Calu3 (cell line): ENCODE measurements at regions of chr1 and their contacts with region 1.

Region 1: GRCh38 chr1:151619489-151620093 is 7.7 kb downstream of the SNX27 start:
- DNase-seq: no peak
- H3K4me3 Mint-ChIP-seq: no peak overlapping the region
- H3K27ac Mint-ChIP-seq: peak overlapping the region; percentile 3
- H3K4me1 Mint-ChIP-seq: peaks cover 47% of the 10 kb centered on the region
- H3K27me3 Mint-ChIP-seq: no peaks in the 10 kb centered on the region
- CTCF ChIP-seq: no peak

Region 2: GRCh38 chr1:151639466-151639865 is 19.9 kb after region 1 on chr1:
- CTCF ChIA-PET with region 1: interaction called, 12 read pairs
- intact Hi-C with region 1: loop called (anchors 2 kb)
- DNase-seq: peak; percentile 15
- H3K4me3 Mint-ChIP-seq: peak overlapping the region; percentile 66
- H3K27ac Mint-ChIP-seq: peak overlapping the region; percentile 90
- H3K4me1 Mint-ChIP-seq: peaks cover 37% of the 10 kb centered on the region
- H3K27me3 Mint-ChIP-seq: no peaks in the 10 kb centered on the region
- CTCF ChIP-seq: no peak

Region 3: DNA sequence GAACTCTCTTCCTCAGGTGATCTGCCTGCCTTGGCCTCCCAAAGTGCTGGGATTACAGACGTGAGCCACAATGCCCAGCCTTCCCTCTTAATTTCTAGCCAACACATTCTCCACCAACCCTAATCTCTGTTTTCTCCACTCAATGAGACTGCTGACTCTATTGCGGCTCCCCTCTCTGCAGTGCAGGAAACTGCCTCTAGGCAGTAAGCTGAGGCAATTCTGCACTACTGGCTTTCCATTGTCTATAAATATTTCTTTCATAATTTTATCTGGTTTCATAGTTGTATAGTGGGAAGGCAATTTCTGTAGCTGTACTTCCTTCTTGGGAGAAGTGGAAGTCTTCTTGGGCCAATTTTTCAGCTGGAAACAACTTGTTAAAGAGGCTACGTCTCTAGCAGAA is 133.6 kb after region 1 on chr1:
- CTCF ChIA-PET with region 1: no interaction called
- intact Hi-C with region 1: no loop called
- DNase-seq: no peak
- H3K4me3 Mint-ChIP-seq: no peak overlapping the region
- H3K27ac Mint-ChIP-seq: no peak overlapping the region
- H3K4me1 Mint-ChIP-seq: peaks cover 8% of the 10 kb centered on the region
- H3K27me3 Mint-ChIP-seq: no peaks in the 10 kb centered on the region
- CTCF ChIP-seq: no peak